Caco-2 (cell line): ENCODE measurements at regions of chr7 and their contacts with region 1.

Region 1: GRCh38 chr7:5083311-5083711 is 37.7 kb downstream of the RBAK start:
- DNase-seq: no peak
- H3K4me3 ChIP-seq: no peak overlapping the region
- H3K4me3 Mint-ChIP-seq: no peak overlapping the region
- H3K27ac Mint-ChIP-seq: no peak overlapping the region
- H3K4me1 ChIP-seq: no peaks in the 10 kb centered on the region
- H3K4me1 Mint-ChIP-seq: no peaks in the 10 kb centered on the region
- H3K27me3 ChIP-seq: no peaks in the 10 kb centered on the region
- H3K27me3 Mint-ChIP-seq: peaks cover 6% of the 10 kb centered on the region
- CTCF ChIP-seq: no peak

Region 2: GRCh38 chr7:4830176-4830575 is 253.1 kb before region 1 on chr7:
- CTCF ChIA-PET with region 1: no interaction called
- POLR2A ChIA-PET with region 1: no interaction called
- intact Hi-C with region 1: loop called (anchors 2 kb)
- DNase-seq: peak; percentile 74 to 78
- H3K4me3 ChIP-seq: no peak overlapping the region
- H3K4me3 Mint-ChIP-seq: no peak overlapping the region
- H3K27ac Mint-ChIP-seq: no peak overlapping the region
- H3K4me1 ChIP-seq: no peaks in the 10 kb centered on the region
- H3K4me1 Mint-ChIP-seq: no peaks in the 10 kb centered on the region
- H3K27me3 ChIP-seq: no peaks in the 10 kb centered on the region
- H3K27me3 Mint-ChIP-seq: peaks cover 2% of the 10 kb centered on the region
- CTCF ChIP-seq: peak; percentile 84 to 91

Region 3: GRCh38 chr7:4849369-4849768 is 233.9 kb before region 1 on chr7:
- CTCF ChIA-PET with region 1: no interaction called
- POLR2A ChIA-PET with region 1: no interaction called
- intact Hi-C with region 1: loop called (anchors 1 kb)
- DNase-seq: peak; percentile 61 to 71
- H3K4me3 ChIP-seq: no peak overlapping the region
- H3K4me3 Mint-ChIP-seq: no peak overlapping the region
- H3K27ac Mint-ChIP-seq: no peak overlapping the region
- H3K4me1 ChIP-seq: no peaks in the 10 kb centered on the region
- H3K4me1 Mint-ChIP-seq: no peaks in the 10 kb centered on the region
- H3K27me3 ChIP-seq: no peaks in the 10 kb centered on the region
- H3K27me3 Mint-ChIP-seq: peaks cover 10% of the 10 kb centered on the region
- CTCF ChIP-seq: peak; percentile 46 to 47

Region 4: DNA sequence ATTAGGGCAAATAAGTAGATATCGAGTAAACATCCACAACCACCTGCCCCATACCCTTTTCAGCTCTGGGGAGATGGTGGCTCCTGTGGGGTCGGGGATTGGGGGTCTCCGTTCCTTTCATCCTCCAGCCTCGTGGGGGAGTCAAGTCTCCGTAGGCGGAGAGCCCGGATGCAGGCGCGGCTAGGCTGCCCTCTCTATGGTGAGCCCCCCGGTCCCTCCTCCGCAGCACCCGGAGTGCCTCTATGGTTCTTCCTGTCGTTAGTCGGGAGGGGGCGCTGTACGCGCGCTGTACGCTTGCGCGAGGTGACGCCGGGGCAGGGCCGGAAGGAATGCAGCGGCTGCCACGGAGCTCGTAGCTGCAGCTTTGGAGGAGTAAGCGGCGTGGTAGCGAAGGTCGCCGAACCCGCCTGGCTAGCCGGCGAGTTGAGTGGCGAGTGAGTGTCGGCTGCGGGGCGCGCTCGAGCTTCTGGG is 109.5 kb before region 1 on chr7:
- CTCF ChIA-PET with region 1: interaction called, 25 read pairs
- POLR2A ChIA-PET with region 1: no interaction called
- intact Hi-C with region 1: loop called (anchors 1 kb)
- DNase-seq: peak; percentile 94 to 97
- H3K4me3 ChIP-seq: peak overlapping the region; percentile 95
- H3K4me3 Mint-ChIP-seq: peak overlapping the region; percentile 93
- H3K27ac Mint-ChIP-seq: peak overlapping the region; percentile 98
- H3K4me1 ChIP-seq: no peaks in the 10 kb centered on the region
- H3K4me1 Mint-ChIP-seq: no peaks in the 10 kb centered on the region
- H3K27me3 ChIP-seq: no peaks in the 10 kb centered on the region
- H3K27me3 Mint-ChIP-seq: no peaks in the 10 kb centered on the region
- CTCF ChIP-seq: peak; percentile 89 to 90

Region 5: DNA sequence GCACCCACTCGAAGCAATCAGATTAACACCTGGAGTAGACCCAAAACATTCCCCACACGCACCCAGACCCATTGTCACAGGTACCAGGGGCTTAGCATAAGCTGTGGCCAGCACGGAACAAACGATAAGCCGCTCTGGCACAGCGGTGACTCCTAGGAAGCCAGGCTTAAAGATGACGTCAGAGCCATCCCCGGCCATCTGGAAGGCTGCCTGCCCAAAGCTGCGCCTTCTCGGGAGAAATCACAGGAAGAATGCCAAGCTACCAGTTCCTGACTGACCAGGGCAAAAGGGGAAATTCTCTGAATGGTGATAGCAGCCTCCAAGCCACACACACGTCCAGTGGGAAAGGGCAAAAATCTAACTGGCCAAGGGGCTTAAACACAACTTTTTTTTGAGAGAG is 93.7 kb after region 1 on chr7:
- CTCF ChIA-PET with region 1: no interaction called
- POLR2A ChIA-PET with region 1: no interaction called
- intact Hi-C with region 1: no loop called
- DNase-seq: no peak
- H3K4me3 ChIP-seq: no peak overlapping the region
- H3K4me3 Mint-ChIP-seq: no peak overlapping the region
- H3K27ac Mint-ChIP-seq: no peak overlapping the region
- H3K4me1 ChIP-seq: no peaks in the 10 kb centered on the region
- H3K4me1 Mint-ChIP-seq: no peaks in the 10 kb centered on the region
- H3K27me3 ChIP-seq: no peaks in the 10 kb centered on the region
- H3K27me3 Mint-ChIP-seq: no peaks in the 10 kb centered on the region
- CTCF ChIP-seq: no peak